GM10248 (cell line): ENCODE measurements at regions of chr5 and their contacts with region 1.

Region 1: DNA sequence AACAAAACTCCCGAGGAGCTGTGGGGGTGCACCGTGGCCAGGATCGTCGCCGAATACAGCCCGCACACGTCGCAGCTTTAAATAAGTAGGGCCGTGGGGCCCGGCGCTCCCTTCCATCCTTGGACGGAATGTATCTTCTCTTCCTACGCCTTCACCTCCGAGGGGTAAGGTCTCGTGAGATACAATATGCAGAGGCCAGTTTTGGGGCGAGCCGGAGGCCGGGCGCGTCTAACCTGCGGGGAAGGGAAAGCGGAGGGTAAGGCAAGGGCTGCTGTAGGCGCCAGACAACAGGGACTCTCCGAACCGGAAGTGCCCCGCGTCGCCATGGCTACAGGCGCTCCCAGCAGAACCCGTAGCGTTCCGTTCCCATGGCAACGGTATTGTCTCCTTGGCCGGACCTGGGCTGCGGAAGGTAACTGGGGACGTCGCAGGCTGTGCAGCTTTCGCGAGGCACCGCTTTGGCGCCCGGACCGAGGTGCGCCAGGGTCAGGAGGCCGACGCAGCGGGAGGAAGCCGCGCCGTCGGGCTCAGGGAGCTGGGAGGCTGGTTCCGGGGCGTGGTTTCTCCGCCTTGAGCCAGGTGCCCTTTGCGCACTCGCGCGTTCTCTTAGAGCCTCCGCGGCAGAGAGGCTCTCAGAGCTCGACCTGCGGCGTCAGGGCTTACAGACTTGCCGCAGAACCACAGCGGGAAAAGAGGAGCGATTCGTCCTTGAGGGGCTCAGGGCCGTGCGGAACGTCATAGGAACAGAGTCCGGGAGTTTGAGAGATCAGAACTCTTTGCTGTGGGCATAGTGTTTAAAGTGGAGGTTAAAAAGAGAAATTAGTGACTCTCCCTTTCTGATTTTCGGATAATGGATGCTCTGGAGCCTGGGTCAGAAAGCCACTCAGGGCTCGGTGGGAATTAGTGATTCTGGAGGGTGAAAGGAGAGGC is at the start of gene TTC23L:
- DNase-seq: peak; percentile 92
- CTCF ChIP-seq: no peak

Region 2: GRCh38 chr5:34459908-34460307 is 379.1 kb before region 1 on chr5:
- CTCF ChIA-PET with region 1: no interaction called
- POLR2A ChIA-PET with region 1: no interaction called
- DNase-seq: no peak
- CTCF ChIP-seq: no peak

Region 3: GRCh38 chr5:34826347-34826746 is 12.7 kb before region 1 on chr5:
- CTCF ChIA-PET with region 1: interaction called, 22 read pairs
- POLR2A ChIA-PET with region 1: no interaction called
- DNase-seq: no peak
- CTCF ChIP-seq: no peak

Region 4: DNA sequence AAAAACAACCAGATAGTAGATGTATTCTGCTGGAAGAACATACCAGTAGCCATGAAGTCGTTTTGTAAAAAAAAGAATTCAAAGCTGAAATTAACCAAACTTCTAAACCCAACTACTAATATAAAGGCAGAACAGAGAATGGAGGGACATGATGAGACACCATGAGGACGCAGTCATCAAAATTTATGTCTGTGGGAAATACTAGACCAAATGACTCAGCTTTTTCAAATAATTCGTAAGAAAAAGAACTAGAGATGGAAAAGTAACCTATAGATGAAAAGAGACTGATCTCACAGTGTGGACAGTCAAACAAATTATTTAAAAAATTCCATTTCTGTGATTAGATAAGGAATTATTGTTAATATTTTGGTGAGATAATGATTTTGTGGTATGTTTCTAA is 10.2 kb after region 1 on chr5:
- CTCF ChIA-PET with region 1: interaction called, 13 read pairs
- POLR2A ChIA-PET with region 1: interaction called, 5 read pairs
- DNase-seq: no peak
- CTCF ChIP-seq: no peak